CD4-positive, alpha-beta T cell (primary cell): ENCODE measurements at regions of chrX and their contacts with region 1.

Region 1: GRCh38 chrX:15335135-15336022 is at the start of gene PIGA:
- DNase-seq: peak; percentile 81 to 97 (median 88)
- ATAC-seq: peak; percentile 90
- H3K4me3 ChIP-seq: peak within 1 kb of the TSS; percentile 96
- H3K4me3 Mint-ChIP-seq: peak within 1 kb of the TSS; percentile 98
- H3K27ac ChIP-seq: peak within 1 kb of the TSS; percentile 77 to 89
- H3K27ac Mint-ChIP-seq: peak within 1 kb of the TSS; percentile 98
- H3K4me1 ChIP-seq: peaks cover 13% of the 10 kb centered on the region
- H3K4me1 Mint-ChIP-seq: peaks cover 26% of the 10 kb centered on the region
- H3K27me3 ChIP-seq: peaks cover 0 to 8% of the 10 kb centered on the region in 2 experiments
- H3K27me3 Mint-ChIP-seq: peaks cover 13% of the 10 kb centered on the region
- CTCF ChIP-seq: no peak
- total RNA-seq, gene PIGA: 130 to 134 TPM

Region 2: DNA sequence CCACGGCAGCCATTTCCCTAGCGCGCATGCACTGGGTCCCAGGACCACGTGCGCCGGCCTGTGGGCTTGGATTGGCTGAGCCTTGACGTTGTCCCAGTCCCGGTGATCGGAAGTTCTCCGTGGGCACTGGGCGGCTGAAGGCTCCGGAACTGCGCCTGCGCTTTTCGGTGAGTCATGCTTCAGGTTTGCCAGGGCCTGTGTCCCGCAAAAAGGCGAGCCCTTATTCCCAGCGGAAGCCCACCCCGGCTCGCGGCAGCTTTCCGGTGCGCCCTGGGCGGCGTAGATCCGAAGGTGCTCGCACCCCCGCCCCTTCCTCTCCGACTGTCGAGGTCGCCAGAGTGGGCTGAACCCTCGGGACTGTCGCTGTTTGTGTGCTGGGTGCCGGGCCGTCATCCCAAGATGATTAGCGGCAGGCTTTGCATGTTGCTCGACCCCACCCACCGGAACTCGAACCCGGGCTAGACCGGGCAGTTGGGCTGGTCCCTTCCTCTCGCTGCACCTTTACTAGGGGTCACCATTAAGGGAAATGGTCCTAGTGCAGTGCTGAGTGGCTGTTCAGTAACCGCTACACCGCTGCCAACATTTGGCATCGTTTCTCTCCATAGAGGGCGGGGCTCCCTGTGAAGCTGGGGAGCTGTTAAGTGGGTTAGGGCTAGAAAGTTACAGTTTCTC is 1682.2 kb before region 1 on chrX and contains the start of gene TCEANC:
- CTCF ChIA-PET with region 1: no interaction called
- POLR2A ChIA-PET with region 1: no interaction called
- intact Hi-C with region 1: loop called in 1 of 2 experiments (anchors 10 kb)
- DNase-seq: peak; percentile 83 to 97 (median 93)
- ATAC-seq: peak; percentile 94
- H3K4me3 ChIP-seq: peak within 1 kb of the TSS; percentile 88
- H3K4me3 Mint-ChIP-seq: peak within 1 kb of the TSS; percentile 98
- H3K27ac ChIP-seq: peak within 1 kb of the TSS; percentile 90 to 93
- H3K27ac Mint-ChIP-seq: peak within 1 kb of the TSS; percentile 99
- H3K4me1 ChIP-seq: peaks cover 9% of the 10 kb centered on the region
- H3K4me1 Mint-ChIP-seq: peaks cover 18% of the 10 kb centered on the region
- H3K27me3 ChIP-seq: no peaks in the 10 kb centered on the region
- H3K27me3 Mint-ChIP-seq: no peaks in the 10 kb centered on the region
- CTCF ChIP-seq: no peak
- total RNA-seq, gene TCEANC: 6.5 to 8.3 TPM

Region 3: GRCh38 chrX:14029425-14030173 is 1305.8 kb before region 1 on chrX and contains the start of gene GEMIN8:
- CTCF ChIA-PET with region 1: no interaction called
- POLR2A ChIA-PET with region 1: no interaction called
- intact Hi-C with region 1: loop called in 1 of 2 experiments (anchors 10 kb)
- DNase-seq: peak; percentile 73 to 94 (median 84)
- ATAC-seq: peak; percentile 85
- H3K4me3 ChIP-seq: peak within 1 kb of the TSS; percentile 82
- H3K4me3 Mint-ChIP-seq: peak within 1 kb of the TSS; percentile 99
- H3K27ac ChIP-seq: peak within 1 kb of the TSS; percentile 82 to 93
- H3K27ac Mint-ChIP-seq: peak within 1 kb of the TSS; percentile 97
- H3K4me1 ChIP-seq: peaks cover 29% of the 10 kb centered on the region
- H3K4me1 Mint-ChIP-seq: peaks cover 52% of the 10 kb centered on the region
- H3K27me3 ChIP-seq: no peaks in the 10 kb centered on the region
- H3K27me3 Mint-ChIP-seq: no peaks in the 10 kb centered on the region
- CTCF ChIP-seq: no peak
- total RNA-seq, gene GEMIN8: 10.2 to 11.1 TPM

Region 4: GRCh38 chrX:15674841-15675489 is 339.6 kb after region 1 on chrX:
- CTCF ChIA-PET with region 1: no interaction called
- POLR2A ChIA-PET with region 1: no interaction called
- intact Hi-C with region 1: loop called in 1 of 2 experiments (anchors 5 kb)
- DNase-seq: peak; percentile 78 to 96 (median 86)
- ATAC-seq: peak; percentile 83
- H3K4me3 ChIP-seq: peak overlapping the region; percentile 90
- H3K4me3 Mint-ChIP-seq: no peak overlapping the region
- H3K27ac ChIP-seq: peak overlapping the region; percentile 99 to 100
- H3K27ac Mint-ChIP-seq: no peak overlapping the region
- H3K4me1 ChIP-seq: peaks cover 16% of the 10 kb centered on the region
- H3K4me1 Mint-ChIP-seq: no peaks in the 10 kb centered on the region
- H3K27me3 ChIP-seq: peaks cover 0 to 4% of the 10 kb centered on the region in 2 experiments
- H3K27me3 Mint-ChIP-seq: no peaks in the 10 kb centered on the region
- CTCF ChIP-seq: no peak

Region 5: GRCh38 chrX:15854712-15855567 is 519.6 kb after region 1 on chrX and contains the start of gene AP1S2:
- CTCF ChIA-PET with region 1: no interaction called
- POLR2A ChIA-PET with region 1: interaction called, 3 read pairs
- intact Hi-C with region 1: loop called in 1 of 2 experiments (anchors 10 kb)
- DNase-seq: peak; percentile 84 to 99 (median 94)
- ATAC-seq: peak; percentile 94
- H3K4me3 ChIP-seq: peak within 1 kb of the TSS; percentile 81
- H3K4me3 Mint-ChIP-seq: peak within 1 kb of the TSS; percentile 97
- H3K27ac ChIP-seq: peak within 1 kb of the TSS; percentile 87 to 89
- H3K27ac Mint-ChIP-seq: peak within 1 kb of the TSS; percentile 100
- H3K4me1 ChIP-seq: peaks cover 5% of the 10 kb centered on the region
- H3K4me1 Mint-ChIP-seq: peaks cover 38% of the 10 kb centered on the region
- H3K27me3 ChIP-seq: no peaks in the 10 kb centered on the region
- H3K27me3 Mint-ChIP-seq: no peaks in the 10 kb centered on the region
- CTCF ChIP-seq: no peak
- total RNA-seq, gene AP1S2: 20.0 to 20.8 TPM

Region 6: DNA sequence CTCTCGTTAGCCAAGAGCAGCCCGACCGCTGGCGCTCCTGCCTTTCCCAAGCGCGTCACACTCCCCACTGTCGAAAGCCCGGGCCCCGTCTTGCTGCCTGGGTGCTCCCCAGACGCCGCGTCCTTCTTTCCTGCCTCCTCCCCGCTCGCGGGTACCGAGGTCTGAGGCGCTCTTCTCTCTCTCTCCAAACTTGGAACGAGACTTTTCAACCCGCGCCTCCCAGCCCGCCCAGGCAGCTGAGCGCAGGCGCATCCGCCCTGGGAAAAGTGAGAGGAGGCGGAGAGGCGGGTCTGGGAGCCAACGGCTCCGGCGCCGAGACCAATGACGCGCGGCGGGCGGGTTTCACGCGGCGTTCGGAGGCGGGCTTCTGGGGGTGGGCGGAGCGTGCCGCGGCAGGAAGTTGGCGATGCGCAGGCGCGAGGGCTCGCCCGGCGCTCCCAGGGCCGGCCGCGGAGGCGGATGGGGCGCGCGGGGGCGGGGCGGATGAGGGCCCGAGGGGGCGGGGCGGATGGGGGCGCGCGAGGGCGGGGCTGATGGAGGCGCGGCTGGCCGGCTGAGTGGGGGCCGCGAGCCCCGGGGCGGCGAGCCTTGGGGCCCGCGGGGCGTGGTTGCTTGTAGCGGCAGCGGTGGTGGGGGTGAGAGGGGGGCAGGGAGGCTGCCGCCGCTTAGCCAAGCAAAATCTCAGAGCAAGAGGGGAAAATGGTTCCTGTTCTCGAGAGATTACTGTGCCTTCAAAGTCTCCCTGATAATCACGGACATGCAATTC is 1534.9 kb after region 1 on chrX and contains the start of gene RBBP7:
- CTCF ChIA-PET with region 1: no interaction called
- POLR2A ChIA-PET with region 1: no interaction called
- intact Hi-C with region 1: loop called in 1 of 2 experiments (anchors 5 kb)
- DNase-seq: peak; percentile 81 to 96 (median 90)
- ATAC-seq: peak; percentile 81
- H3K4me3 ChIP-seq: peak within 1 kb of the TSS; percentile 82
- H3K4me3 Mint-ChIP-seq: peak within 1 kb of the TSS; percentile 99
- H3K27ac ChIP-seq: peak within 1 kb of the TSS; percentile 83 to 95
- H3K27ac Mint-ChIP-seq: peak within 1 kb of the TSS; percentile 99
- H3K4me1 ChIP-seq: peaks cover 16% of the 10 kb centered on the region
- H3K4me1 Mint-ChIP-seq: peaks cover 38% of the 10 kb centered on the region
- H3K27me3 ChIP-seq: no peaks in the 10 kb centered on the region
- H3K27me3 Mint-ChIP-seq: no peaks in the 10 kb centered on the region
- CTCF ChIP-seq: no peak
- total RNA-seq, gene RBBP7: 104 to 110 TPM